ENCODE measurements at regions of chr3 and their contacts with region 1.

Region 1: DNA sequence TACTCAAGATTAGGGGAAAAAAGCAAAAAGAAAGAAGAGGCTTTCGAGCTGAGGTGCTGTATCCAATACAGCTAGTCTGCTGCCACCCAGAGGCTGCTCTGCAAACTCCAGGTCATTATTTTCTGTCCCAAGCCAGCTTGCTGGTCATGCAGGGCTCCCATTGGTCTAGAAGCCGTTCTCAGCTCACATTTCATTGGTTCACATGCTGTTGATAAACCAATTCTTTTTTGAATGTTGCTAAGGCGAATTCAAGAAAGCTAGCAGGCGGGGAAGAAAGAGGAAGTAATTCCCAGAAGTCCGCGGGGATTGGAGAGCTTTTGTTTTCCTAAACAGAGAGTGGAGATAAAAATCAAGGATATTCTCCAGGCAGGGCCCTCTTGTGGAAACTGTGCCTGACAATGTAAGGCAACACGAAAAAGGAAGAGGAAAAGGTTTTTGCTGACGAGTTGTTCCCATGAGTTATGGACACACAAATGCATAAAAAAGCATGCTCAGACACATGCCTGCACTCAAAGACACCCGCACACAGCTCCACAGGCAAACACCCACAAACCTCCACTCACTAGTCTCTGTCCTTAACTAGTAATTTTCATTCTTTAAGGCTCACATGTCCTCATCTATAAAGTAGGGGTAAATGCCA is 33.4 kb downstream of the FSTL1 start:
- DNase-seq: peak; percentile 89
- ATAC-seq: peak; percentile 95
- H3K4me3 ChIP-seq: peak overlapping the region; percentile 40 to 64 (median 50)
- H3K27ac ChIP-seq: no peak overlapping the region
- H3K4me1 ChIP-seq: peaks cover 17% of the 10 kb centered on the region
- H3K27me3 ChIP-seq: peaks cover 0 to 1% of the 10 kb centered on the region in 2 experiments; a peak in 2 of 5 replicates
- CTCF ChIP-seq: peak; percentile 88
- EP300 ChIP-seq: peak in 1 of 2 experiments; percentile 56; a peak in 1 of 4 replicates
- POLR2A ChIP-seq: no peak
- RAD21 ChIP-seq: peak; percentile 51; the same call in 1 of the 2 replicates

Region 2: GRCh38 chr3:119891944-119892721 is 525.3 kb before region 1 on chr3:
- CTCF ChIA-PET with region 1: no interaction called
- POLR2A ChIA-PET with region 1: no interaction called
- in situ Hi-C with region 1: no loop called
- intact Hi-C with region 1: loop called (anchors 5 kb)
- DNase-seq: peak; percentile 55
- ATAC-seq: peak; percentile 73
- H3K4me3 ChIP-seq: no peak overlapping the region
- H3K27ac ChIP-seq: no peak overlapping the region
- H3K4me1 ChIP-seq: no peaks in the 10 kb centered on the region
- H3K27me3 ChIP-seq: no peaks in the 10 kb centered on the region
- CTCF ChIP-seq: peak; percentile 67
- EP300 ChIP-seq: no peak
- POLR2A ChIP-seq: no peak
- RAD21 ChIP-seq: peak; percentile 55; the same call in 1 of the 2 replicates

Region 3: DNA sequence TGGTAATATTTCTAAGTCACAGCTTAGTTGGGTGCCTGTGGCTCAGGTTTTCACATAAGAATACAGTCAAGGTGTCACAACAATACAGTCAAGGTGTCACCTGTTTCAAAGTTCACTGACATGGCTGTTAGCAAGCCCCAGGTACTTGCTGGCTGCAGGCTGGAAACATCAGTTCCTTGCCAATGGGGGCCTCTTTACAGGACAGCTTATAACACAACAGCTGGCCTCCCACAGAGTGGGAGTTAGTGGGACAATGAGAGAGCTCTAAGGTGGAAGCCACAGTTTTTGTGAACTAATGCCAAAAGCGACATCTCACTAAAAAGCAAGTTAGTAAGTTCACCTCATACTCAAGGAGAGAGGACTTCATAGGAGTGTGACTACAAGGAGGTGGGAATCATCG is 177.7 kb before region 1 on chr3:
- CTCF ChIA-PET with region 1: interaction called, 25 read pairs
- POLR2A ChIA-PET with region 1: no interaction called
- in situ Hi-C with region 1: loop called (anchors 5 kb)
- intact Hi-C with region 1: loop called (anchors 1 kb)
- DNase-seq: no peak
- ATAC-seq: no peak
- H3K4me3 ChIP-seq: no peak overlapping the region
- H3K27ac ChIP-seq: no peak overlapping the region
- H3K4me1 ChIP-seq: no peaks in the 10 kb centered on the region
- H3K27me3 ChIP-seq: 0 out of 5 replicates have a peak, but pooled peaks cover 0 to 3% of the 10 kb centered on the region in 2 experiments
- CTCF ChIP-seq: no peak
- EP300 ChIP-seq: no peak
- POLR2A ChIP-seq: no peak
- RAD21 ChIP-seq: no peak

Region 4: DNA sequence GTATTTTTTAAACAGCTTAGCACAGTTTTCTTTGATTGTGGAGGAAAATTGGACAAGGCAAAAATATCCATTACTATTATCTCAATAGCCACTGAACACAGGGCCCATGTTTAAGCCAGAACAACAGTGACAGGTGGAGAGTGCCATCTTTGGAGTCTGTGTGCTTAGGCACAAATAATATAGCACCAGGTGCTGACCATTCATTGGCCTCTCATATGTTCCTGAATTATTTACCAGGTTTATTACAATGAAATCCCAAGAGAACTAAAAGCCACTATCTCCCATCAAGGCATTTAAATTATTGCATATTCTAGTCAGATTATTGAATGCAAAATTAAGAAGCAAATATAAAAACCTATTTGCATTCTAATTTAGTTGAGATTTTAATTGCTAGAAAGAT is 172.0 kb before region 1 on chr3:
- CTCF ChIA-PET with region 1: interaction called, 25 read pairs
- POLR2A ChIA-PET with region 1: no interaction called
- in situ Hi-C with region 1: loop called (anchors 5 kb)
- intact Hi-C with region 1: loop called (anchors 1 kb)
- DNase-seq: no peak
- ATAC-seq: no peak
- H3K4me3 ChIP-seq: no peak overlapping the region
- H3K27ac ChIP-seq: no peak overlapping the region
- H3K4me1 ChIP-seq: no peaks in the 10 kb centered on the region
- H3K27me3 ChIP-seq: no peaks in the 10 kb centered on the region
- CTCF ChIP-seq: no peak
- EP300 ChIP-seq: no peak
- POLR2A ChIP-seq: no peak
- RAD21 ChIP-seq: no peak

Region 5: DNA sequence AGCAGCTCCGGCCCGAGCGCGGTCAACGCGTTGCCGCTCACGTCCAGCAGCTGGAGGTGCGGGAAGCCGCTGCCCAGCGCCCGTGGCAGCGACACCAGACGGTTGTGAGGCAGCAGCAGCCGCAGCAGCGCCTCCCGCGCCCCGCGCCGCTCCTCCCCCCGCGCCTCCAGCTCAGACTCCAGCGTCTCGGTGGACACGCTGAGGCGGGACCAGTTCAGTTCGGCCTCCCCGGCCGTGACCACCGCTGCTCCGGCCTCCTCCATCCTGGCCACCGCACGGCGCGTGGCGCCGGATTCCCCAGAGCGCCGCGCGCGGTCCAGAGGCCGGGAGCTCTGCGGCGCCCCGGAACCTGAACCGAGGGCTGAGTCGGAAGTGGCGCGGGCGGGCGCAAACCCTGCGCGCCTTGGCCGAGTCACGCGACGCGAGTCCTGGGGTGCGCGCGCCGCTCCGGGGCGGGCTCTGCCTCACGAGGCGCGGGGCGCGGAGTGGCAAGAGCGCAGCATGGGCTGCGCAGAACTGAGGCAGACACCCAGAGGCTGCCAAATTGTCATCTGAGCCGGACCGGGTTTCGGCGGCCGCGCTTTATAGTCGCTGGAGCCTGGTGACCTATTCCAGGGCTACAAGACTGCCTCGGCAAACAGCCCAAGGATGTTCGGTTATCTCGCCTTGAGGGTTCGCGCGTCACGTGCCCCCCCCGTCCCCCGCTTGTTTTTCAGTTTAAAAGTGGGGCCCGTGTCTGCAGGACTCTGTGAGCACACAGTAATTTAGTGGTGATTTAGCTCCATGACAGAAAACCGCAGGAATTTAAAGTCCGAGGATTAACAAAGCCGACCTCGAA is 68.2 kb before region 1 on chr3 and contains the start of gene LRRC58:
- CTCF ChIA-PET with region 1: no interaction called
- POLR2A ChIA-PET with region 1: interaction called, 13 read pairs
- in situ Hi-C with region 1: no loop called
- intact Hi-C with region 1: loop called (anchors 2 kb)
- DNase-seq: peak; percentile 81
- ATAC-seq: peak; percentile 91
- H3K4me3 ChIP-seq: peak within 1 kb of the TSS; percentile 68 to 95 (median 87)
- H3K27ac ChIP-seq: peak within 1 kb of the TSS; percentile 81
- H3K4me1 ChIP-seq: peaks cover 45% of the 10 kb centered on the region
- H3K27me3 ChIP-seq: peaks cover 0 to 7% of the 10 kb centered on the region in 2 experiments; a peak in 2 of 5 replicates
- CTCF ChIP-seq: peak; percentile 66
- EP300 ChIP-seq: no peak
- POLR2A ChIP-seq: peak; percentile 74 to 80; a peak in 3 of 4 replicates
- RAD21 ChIP-seq: peak; percentile 54; the same call in 1 of the 2 replicates
- total RNA-seq, gene LRRC58: 17.3 and 28.8 TPM in 2 replicates

Region 6: GRCh38 chr3:120506828-120507774 is 89.7 kb after region 1 on chr3:
- CTCF ChIA-PET with region 1: no interaction called
- POLR2A ChIA-PET with region 1: no interaction called
- in situ Hi-C with region 1: no loop called
- intact Hi-C with region 1: loop called (anchors 1 kb)
- DNase-seq: peak; percentile 32
- ATAC-seq: peak; percentile 71
- H3K4me3 ChIP-seq: peak overlapping the region in 1 of 3 experiments; percentile 12; a peak in 1 of 6 replicates
- H3K27ac ChIP-seq: no peak overlapping the region
- H3K4me1 ChIP-seq: peaks cover 8% of the 10 kb centered on the region
- H3K27me3 ChIP-seq: peaks cover 0 to 8% of the 10 kb centered on the region in 2 experiments; a peak in 2 of 5 replicates
- CTCF ChIP-seq: peak; percentile 58
- EP300 ChIP-seq: no peak
- POLR2A ChIP-seq: no peak
- RAD21 ChIP-seq: no peak

Region 7: GRCh38 chr3:120558771-120559241 is 141.4 kb after region 1 on chr3:
- CTCF ChIA-PET with region 1: interaction called, 9 read pairs
- POLR2A ChIA-PET with region 1: no interaction called
- in situ Hi-C with region 1: loop called (anchors 5 kb)
- intact Hi-C with region 1: loop called (anchors 1 kb)
- DNase-seq: peak; percentile 66
- ATAC-seq: peak; percentile 76
- H3K4me3 ChIP-seq: peak overlapping the region; percentile 52 to 73 (median 54)
- H3K27ac ChIP-seq: no peak overlapping the region
- H3K4me1 ChIP-seq: peaks cover 35% of the 10 kb centered on the region
- H3K27me3 ChIP-seq: peaks cover 0 to 5% of the 10 kb centered on the region in 2 experiments; a peak in 1 of 5 replicates
- CTCF ChIP-seq: peak; percentile 88
- EP300 ChIP-seq: no peak
- POLR2A ChIP-seq: no peak
- RAD21 ChIP-seq: peak; percentile 77; the same call in 1 of the 2 replicates